ENCODE measurements at regions of chr2 and their contacts with region 1.

Region 1: DNA sequence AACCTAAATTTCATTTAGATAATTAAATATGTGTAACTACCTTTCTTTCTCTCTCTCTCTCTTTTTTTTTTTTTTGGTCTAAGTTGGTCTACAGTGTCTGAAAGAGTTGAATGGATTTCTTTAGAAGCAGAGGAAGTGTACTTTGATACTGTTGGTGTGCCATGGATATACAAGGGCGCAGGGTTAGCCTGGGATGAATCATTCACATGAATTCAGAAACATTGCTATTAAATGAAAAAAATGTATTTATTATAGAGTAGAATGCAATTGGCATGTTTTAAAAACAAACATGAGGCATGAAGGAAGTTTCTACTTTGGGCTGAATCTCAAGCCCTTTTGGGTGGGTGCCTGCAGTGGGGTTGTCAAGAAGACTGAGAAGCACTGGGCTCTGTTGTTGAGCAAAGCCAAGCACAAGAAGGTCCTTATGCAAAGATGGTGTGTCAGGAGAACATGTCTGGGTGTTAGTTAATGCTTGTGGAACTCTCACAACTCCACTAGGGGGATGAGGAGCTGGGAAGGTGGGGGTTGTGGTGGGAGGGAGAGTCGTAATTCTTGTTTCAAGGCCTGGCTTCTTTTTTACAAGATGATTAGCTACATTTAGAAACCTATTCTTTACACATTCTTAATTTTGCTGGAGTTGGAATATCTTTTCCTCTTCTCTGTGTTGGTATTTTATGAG is 57.9 kb downstream of the LYPD6 start:
- DNase-seq: no peak
- ATAC-seq: no peak
- H3K4me3 ChIP-seq: no peak overlapping the region
- H3K27ac ChIP-seq: no peak overlapping the region
- H3K4me1 ChIP-seq: no peaks in the 10 kb centered on the region
- H3K27me3 ChIP-seq: no peaks in the 10 kb centered on the region

Region 2: GRCh38 chr2:149307014-149307413 is 81.2 kb before region 1 on chr2:
- intact Hi-C with region 1: loop called in 1 of 2 experiments (anchors 5 kb)
- DNase-seq: no peak
- ATAC-seq: no peak
- H3K4me3 ChIP-seq: no peak overlapping the region
- H3K27ac ChIP-seq: no peak overlapping the region
- H3K4me1 ChIP-seq: no peaks in the 10 kb centered on the region
- H3K27me3 ChIP-seq: peaks cover 0 to 2% of the 10 kb centered on the region in 2 donors

Measured in aorta (tissue), 5 donors.